Activated T-helper 1 cell treated with anti-CD3 and anti-CD28 coated beads, Interleukin-12 subunit alpha, Interleukin-12 subunit beta, Interleukin-2, Interleukin-4 antibody, amounts not matched to agents 30 ng/mL and 10 ng/mL and 1 ng/mL, durations not matched to agents 14 hours and 24 hours and 36 hours (primary cell): ENCODE measurements at regions of chr9 and their contacts with region 1.

Region 1: DNA sequence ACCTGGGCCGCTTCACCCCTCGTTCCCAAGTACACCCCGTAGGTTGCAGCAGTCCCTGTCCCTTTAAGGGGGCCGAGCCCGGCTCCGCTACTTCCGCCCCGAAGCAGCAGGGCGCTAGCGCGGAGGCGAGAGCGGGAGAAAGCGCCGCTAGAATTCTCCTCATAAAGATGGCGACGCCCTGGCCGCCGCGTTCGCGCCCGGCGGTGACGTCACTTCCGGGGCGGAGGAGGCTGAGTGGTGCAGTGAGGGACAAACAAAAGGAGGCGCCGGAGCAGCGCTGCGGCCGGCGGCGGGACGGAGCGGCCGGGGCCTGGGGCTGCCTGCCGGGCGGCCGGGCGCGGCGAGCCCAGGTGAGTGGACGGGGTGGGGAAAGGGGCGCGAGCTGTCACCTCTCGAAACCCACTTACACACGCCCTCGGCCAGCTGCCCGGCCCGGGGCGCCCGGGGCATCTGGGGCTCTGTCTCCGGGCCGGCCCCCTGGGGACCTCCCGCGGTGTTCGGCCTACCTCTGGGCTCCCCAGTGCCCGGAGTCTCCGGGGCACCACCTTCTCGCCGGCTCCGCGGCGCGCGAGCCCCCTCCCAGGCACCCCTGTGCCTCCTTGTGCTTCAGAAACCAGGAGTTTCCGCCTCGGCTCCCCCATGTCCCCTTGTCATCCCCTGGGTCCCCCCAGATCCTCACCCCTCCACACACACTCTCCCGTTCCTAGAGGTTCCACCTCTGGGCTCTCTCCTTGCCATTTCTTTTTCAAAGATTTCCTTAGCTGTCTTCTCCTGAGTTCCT is at the starts of genes KYAT1 and LRRC8A:
- DNase-seq: peak; percentile 99
- H3K4me3 Mint-ChIP-seq: peak within 1 kb of the TSS; percentile 96
- H3K27ac Mint-ChIP-seq: peak within 1 kb of the TSS; percentile 97
- H3K4me1 Mint-ChIP-seq: peaks cover 53% of the 10 kb centered on the region
- H3K27me3 Mint-ChIP-seq: peaks cover 2% of the 10 kb centered on the region
- total RNA-seq, gene KYAT1: 10.6 and 12.2 TPM in 2 replicates
- total RNA-seq, gene LRRC8A: 30.1 and 32.9 TPM in 2 replicates

Region 2: DNA sequence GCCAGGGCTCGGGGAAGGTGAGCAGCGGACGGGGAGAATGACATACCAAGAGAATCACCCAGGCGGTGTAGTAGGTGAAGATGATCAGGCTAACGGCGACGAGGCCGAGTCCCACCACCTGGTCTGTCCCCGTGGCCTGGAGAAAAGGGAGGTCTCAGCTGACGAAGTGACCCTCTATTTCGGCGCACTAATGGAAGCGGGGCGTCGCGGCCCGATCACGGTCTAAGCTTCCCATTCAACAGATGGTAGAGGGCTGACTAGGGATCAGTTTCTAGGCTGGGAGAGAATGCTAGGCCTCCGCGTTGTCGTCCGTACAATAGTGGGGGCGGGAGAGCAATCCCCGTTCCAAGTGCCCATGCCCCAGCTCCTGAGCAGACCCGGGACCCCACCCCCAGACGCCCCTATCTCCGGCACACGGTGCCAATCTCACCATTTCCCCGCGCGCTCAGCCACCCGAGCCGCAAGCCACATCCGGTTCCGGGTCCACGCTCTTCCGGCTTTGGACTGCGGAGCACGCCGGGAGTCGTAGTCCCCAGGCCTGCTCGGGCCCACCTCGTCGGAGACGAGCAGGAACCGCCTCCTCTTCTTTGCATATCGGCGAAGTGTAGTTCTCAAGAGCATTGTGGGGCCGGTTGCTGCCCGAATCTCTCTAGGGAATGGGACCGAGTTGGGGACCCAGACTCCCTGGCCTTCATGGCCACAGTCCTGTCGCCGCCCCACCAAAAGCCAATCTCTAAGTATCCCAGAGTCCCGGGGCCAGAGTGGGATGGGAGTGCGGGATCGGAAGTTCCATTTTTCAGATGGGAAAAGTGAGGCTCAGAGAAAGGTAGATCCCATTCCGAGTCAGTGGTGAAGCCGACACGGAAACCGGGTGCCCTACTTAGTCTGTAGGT is 944.5 kb before region 1 on chr9 and contains the start of gene DPM2:
- intact Hi-C with region 1: loop called (anchors 5 kb)
- DNase-seq: peak; percentile 82
- H3K4me3 Mint-ChIP-seq: peak within 1 kb of the TSS; percentile 92
- H3K27ac Mint-ChIP-seq: peak within 1 kb of the TSS; percentile 91
- H3K4me1 Mint-ChIP-seq: peaks cover 37% of the 10 kb centered on the region
- H3K27me3 Mint-ChIP-seq: peaks cover 2% of the 10 kb centered on the region
- total RNA-seq, gene DPM2: 62.6 and 70.2 TPM in 2 replicates

Region 3: DNA sequence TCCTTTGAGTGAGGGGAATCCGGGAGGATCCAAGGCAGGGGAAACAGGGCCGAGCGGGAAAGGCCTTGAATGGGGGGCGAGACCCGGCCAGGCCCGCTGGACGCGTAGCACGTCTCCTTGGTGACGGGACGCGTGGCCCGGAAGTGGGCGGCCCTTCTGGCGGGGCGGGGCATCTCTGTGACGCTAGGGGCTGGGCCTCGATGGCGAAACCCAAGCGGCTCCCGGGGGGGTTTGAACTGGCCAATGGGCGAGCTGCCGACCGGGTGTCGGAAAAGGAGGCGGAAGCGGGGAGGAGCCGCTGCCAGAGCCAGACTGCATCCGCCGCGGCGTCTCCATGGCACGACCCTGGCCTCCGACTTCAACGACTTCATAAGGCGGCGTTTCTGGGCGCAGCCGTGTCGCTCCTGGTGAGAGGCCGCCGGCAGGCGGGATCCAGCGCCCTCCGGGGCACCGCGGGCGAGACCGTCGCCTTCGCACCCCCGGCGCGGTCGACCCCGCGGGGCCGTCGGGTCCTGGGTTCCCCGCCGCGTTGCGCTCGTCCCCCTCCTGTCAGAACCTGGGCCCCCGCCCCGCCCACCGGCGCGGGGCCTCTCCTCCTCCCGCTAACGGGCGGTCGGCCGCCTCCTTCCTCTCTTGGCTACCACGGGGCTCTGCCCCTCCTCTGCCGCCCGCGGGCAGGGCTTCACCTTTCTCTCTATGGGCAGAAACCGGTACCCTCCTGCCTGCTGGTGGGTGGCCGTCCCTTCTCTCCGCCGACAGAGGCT is 426.1 kb before region 1 on chr9 and contains the start of gene ODF2:
- intact Hi-C with region 1: loop called (anchors 2 kb)
- DNase-seq: peak; percentile 98
- H3K4me3 Mint-ChIP-seq: peak within 1 kb of the TSS; percentile 93
- H3K27ac Mint-ChIP-seq: peak within 1 kb of the TSS; percentile 98
- H3K4me1 Mint-ChIP-seq: peaks cover 13% of the 10 kb centered on the region
- H3K27me3 Mint-ChIP-seq: peaks cover 3% of the 10 kb centered on the region
- total RNA-seq, gene ODF2: 55.6 and 57.6 TPM in 2 replicates

Region 4: DNA sequence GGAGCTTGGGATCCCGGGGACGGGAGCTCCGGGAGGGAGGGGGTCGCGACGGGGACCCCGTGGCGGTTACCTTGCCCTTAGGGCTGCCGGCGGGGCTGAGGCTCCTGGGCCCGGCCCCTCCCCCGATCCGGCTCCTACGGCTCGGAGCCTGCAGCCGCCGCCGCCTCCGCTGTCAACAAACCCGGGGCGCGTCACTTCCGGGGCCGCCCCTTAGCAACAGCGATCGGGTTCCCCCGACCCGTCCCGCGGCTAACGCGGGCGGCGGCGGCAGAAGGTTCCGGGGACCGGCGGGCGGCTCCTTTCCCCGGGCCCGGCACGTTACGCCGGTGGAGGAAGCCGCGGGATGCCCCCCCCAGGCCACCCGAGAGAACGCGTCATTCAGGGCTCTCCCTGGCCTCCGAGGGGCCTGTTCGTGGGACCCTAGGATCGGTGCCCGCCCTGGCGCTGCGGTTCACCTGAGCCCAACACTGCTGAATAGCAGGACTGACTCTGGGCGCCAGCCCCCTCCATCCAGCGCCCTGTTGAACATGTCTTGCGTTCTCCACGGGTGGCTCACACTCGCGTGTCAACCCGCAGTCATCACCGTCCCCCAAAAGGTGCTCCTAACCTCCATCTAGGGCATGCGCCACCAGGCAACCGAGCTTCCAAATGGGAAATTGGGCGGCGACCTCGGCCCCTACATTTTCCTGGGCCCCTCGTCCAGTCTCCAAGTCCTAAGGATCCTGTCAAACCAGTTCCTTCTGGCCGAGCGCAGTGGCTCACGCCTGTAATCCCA is 110.2 kb before region 1 on chr9 and contains the start of gene ZER1:
- intact Hi-C with region 1: loop called (anchors 5 kb)
- DNase-seq: peak; percentile 92
- H3K4me3 Mint-ChIP-seq: peak within 1 kb of the TSS; percentile 98
- H3K27ac Mint-ChIP-seq: peak within 1 kb of the TSS; percentile 95
- H3K4me1 Mint-ChIP-seq: peaks cover 14% of the 10 kb centered on the region
- H3K27me3 Mint-ChIP-seq: no peaks in the 10 kb centered on the region
- total RNA-seq, gene ZER1: 21.1 and 21.5 TPM in 2 replicates

Region 5: DNA sequence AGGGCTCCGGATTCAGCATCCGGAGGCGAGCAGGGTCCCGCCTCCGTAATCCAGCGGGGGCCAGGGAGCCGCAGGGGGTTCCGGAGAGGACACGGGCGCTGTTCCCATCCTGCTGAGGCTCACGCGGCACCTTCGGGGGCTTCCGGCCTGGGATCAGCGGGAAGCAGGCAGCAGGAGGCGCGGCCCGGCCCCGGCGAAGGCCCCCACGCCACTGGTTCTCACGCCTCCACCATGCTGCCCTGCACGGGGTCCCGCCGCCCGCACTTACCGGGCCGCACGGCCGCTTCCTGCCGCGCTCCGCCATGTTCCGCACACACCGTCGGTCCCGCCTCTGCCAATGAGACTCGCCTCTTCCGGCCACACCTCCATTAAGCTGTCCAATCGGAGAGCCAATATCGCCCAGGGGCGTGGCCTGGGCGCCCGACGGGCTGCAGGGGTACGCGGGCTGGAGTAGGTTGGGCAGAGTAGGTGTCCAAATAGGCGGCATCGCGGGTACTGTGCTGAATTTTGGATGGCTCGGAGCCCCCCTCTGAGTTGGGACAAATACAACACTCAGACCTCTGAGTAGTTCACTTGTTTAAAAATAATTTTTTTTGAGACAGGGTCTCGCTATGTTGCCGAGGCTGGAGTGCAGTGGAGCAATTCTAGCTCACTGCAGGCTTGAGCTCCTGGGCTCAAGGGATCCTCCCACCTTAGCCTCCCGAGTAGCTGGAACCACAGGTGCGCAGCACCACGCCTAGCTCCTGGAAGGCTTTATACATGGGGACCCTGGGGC is 52.4 kb before region 1 on chr9 and contains the start of gene SPOUT1:
- intact Hi-C with region 1: loop called (anchors 1 kb)
- DNase-seq: peak; percentile 95
- H3K4me3 Mint-ChIP-seq: peak within 1 kb of the TSS; percentile 97
- H3K27ac Mint-ChIP-seq: peak within 1 kb of the TSS; percentile 88
- H3K4me1 Mint-ChIP-seq: peaks cover 23% of the 10 kb centered on the region
- H3K27me3 Mint-ChIP-seq: no peaks in the 10 kb centered on the region
- total RNA-seq, gene SPOUT1: 151 and 158 TPM in 2 replicates

Region 6: DNA sequence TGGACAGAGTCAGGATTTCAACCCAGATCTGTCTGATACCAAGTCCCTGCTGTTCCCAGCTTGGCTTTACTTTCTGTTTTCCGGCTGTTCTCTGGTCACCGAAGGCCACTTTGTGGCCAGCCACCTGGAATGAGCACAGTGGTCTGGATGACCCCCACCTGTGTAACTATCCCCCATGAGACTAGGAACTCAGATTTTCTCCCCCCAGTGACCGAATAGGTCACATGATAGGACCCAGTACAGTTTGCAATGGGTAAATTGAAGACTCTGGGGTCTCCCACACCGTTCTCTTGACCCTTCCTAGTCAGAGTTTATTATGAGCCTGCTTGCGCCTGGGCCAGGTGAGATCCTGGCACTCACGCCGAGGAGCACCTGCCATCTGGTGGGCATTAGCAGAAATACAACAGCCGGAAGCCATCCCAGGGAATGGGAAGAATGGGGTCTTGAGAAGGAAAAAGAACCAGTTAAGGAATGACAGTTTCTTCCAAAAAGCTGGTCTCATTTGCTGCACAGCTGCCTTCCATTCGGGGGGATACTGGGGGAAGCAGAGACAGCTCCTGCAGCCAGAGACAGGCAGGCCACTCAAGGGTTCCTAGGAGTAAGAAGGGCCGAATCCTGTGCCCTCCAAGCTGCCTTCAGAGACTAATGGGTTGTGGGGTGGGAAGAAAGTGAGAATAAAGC is 45.8 kb after region 1 on chr9:
- intact Hi-C with region 1: loop called (anchors 5 kb)
- DNase-seq: peak; percentile 21
- H3K4me3 Mint-ChIP-seq: no peak overlapping the region
- H3K27ac Mint-ChIP-seq: peak overlapping the region; percentile 25
- H3K4me1 Mint-ChIP-seq: peaks cover 14% of the 10 kb centered on the region
- H3K27me3 Mint-ChIP-seq: no peaks in the 10 kb centered on the region

Region 7: GRCh38 chr9:129036241-129036922 is 154.3 kb after region 1 on chr9 and contains the start of gene MIGA2:
- intact Hi-C with region 1: loop called (anchors 1 kb)
- DNase-seq: peak; percentile 95
- H3K4me3 Mint-ChIP-seq: peak within 1 kb of the TSS; percentile 97
- H3K27ac Mint-ChIP-seq: peak within 1 kb of the TSS; percentile 79
- H3K4me1 Mint-ChIP-seq: peaks cover 20% of the 10 kb centered on the region
- H3K27me3 Mint-ChIP-seq: peaks cover 2% of the 10 kb centered on the region
- total RNA-seq, gene MIGA2: 43.4 and 43.8 TPM in 2 replicates

Region 8: DNA sequence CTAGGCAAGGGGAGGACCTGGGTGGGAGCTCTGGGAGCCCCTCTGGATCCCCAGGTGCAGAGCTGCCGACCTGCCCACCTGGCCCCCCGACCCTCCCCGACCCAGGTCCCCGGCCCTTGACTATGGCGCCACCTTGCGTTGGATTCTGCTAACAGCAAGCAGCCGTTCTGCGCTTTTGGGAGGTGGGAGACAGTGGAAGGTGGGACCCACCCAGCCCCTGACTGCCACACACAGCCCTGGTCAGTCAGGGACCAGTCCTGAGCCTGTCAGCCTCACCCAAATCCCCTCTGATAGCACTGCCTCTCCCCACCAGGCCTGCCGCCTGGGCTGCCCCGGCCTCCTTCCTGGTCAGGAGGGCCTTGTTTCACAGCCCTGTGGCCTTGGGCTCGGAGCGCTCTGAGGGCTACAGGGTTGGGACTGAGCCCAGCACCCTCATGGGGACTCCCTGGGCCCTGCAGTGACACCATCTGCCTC is 1461.4 kb after region 1 on chr9:
- intact Hi-C with region 1: no loop called
- DNase-seq: no peak
- H3K4me3 Mint-ChIP-seq: no peak overlapping the region
- H3K27ac Mint-ChIP-seq: no peak overlapping the region
- H3K4me1 Mint-ChIP-seq: no peaks in the 10 kb centered on the region
- H3K27me3 Mint-ChIP-seq: no peaks in the 10 kb centered on the region